ENCODE measurements at regions of chr13 and their contacts with region 1.

Region 1: GRCh38 chr13:100235311-100235901 is 146.5 kb downstream of the PCCA start:
- DNase-seq: no peak
- ATAC-seq: peak; percentile 71
- H3K4me3 ChIP-seq: no peak overlapping the region
- H3K27ac ChIP-seq: no peak overlapping the region
- H3K4me1 ChIP-seq: no peaks in the 10 kb centered on the region; the same call in none of the 2 replicates
- H3K27me3 ChIP-seq: no peaks in the 10 kb centered on the region
- CTCF ChIP-seq: peak; percentile 30 to 53 (median 34); a peak in 4 of 6 replicates
- EP300 ChIP-seq: no peak
- POLR2A ChIP-seq: no peak
- RAD21 ChIP-seq: peak; percentile 83

Region 2: DNA sequence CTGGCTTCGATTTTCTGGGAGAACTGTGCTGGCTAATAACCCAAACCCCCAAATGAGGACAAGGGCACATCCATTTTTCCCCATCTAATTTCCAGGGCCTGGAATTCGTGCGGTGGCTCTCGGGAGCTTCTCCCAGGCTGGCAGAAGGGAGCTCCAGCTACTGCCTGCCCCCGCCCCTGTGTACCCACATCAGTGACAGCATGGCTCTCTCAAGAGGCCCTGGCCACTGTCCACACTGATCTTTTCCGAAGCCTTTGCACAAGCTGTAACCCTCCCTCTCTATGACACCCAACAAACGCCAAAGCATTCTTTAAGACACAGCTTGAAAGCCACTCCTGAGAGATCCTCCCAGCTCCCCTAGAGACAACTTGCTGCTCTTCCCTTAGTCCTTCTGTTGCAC is 337.0 kb before region 1 on chr13:
- CTCF ChIA-PET with region 1: interaction called, 18 read pairs
- POLR2A ChIA-PET with region 1: no interaction called
- RAD21 ChIA-PET with region 1: interaction called, 8 read pairs
- SMC1A ChIA-PET with region 1: interaction called, 6 read pairs
- in situ Hi-C with region 1: no loop called
- intact Hi-C with region 1: loop called (anchors 1 kb)
- DNase-seq: no peak
- ATAC-seq: no peak
- H3K4me3 ChIP-seq: no peak overlapping the region
- H3K27ac ChIP-seq: no peak overlapping the region
- H3K4me1 ChIP-seq: no peaks in the 10 kb centered on the region
- H3K27me3 ChIP-seq: peaks cover 0 to 12% of the 10 kb centered on the region in 2 experiments; a peak in 2 of 4 replicates
- CTCF ChIP-seq: no peak
- EP300 ChIP-seq: no peak
- POLR2A ChIP-seq: no peak
- RAD21 ChIP-seq: no peak

Region 3: GRCh38 chr13:99916366-99917103 is 318.9 kb before region 1 on chr13:
- CTCF ChIA-PET with region 1: interaction called, 74 read pairs
- POLR2A ChIA-PET with region 1: no interaction called
- RAD21 ChIA-PET with region 1: interaction called, 18 read pairs
- SMC1A ChIA-PET with region 1: interaction called, 33 read pairs
- in situ Hi-C with region 1: loop called (anchors 5 kb)
- intact Hi-C with region 1: loop called (anchors 1 kb)
- DNase-seq: peak; percentile 31
- ATAC-seq: peak; percentile 95
- H3K4me3 ChIP-seq: no peak overlapping the region
- H3K27ac ChIP-seq: no peak overlapping the region
- H3K4me1 ChIP-seq: no peaks in the 10 kb centered on the region
- H3K27me3 ChIP-seq: no peaks in the 10 kb centered on the region
- CTCF ChIP-seq: peak; percentile 91 to 99 (median 93)
- EP300 ChIP-seq: no peak
- POLR2A ChIP-seq: no peak
- RAD21 ChIP-seq: peak; percentile 86

Region 4: GRCh38 chr13:99995589-99996380 is 239.6 kb before region 1 on chr13:
- CTCF ChIA-PET with region 1: interaction called, 3 read pairs
- POLR2A ChIA-PET with region 1: no interaction called
- RAD21 ChIA-PET with region 1: interaction called, 3 read pairs
- SMC1A ChIA-PET with region 1: no interaction called
- in situ Hi-C with region 1: no loop called
- intact Hi-C with region 1: loop called (anchors 10 kb)
- DNase-seq: no peak
- ATAC-seq: no peak
- H3K4me3 ChIP-seq: no peak overlapping the region
- H3K27ac ChIP-seq: no peak overlapping the region
- H3K4me1 ChIP-seq: no peaks in the 10 kb centered on the region
- H3K27me3 ChIP-seq: peaks cover 7 to 29% of the 10 kb centered on the region in 2 experiments
- CTCF ChIP-seq: no peak
- EP300 ChIP-seq: no peak
- POLR2A ChIP-seq: no peak
- RAD21 ChIP-seq: no peak

Region 5: DNA sequence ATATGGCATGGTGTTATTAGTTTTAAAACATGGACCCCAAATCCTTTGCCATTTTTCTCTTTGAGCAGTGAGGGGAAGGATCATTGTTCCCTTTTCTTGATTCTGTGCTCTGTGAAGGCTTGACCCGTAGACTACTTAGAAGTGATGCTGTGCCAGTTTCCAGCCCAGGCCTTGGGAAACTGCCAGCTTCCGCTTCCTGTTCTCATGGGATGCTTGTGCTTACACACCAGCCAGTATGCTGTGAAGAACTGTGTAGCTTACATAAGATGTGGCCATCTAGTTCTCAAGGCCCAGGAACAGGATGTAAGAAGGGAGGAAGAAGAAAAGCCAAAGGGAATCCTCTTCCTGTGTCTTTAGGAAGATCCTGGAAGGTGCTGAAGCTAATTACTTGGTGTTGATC is 34.4 kb after region 1 on chr13:
- CTCF ChIA-PET with region 1: no interaction called
- POLR2A ChIA-PET with region 1: no interaction called
- RAD21 ChIA-PET with region 1: no interaction called
- SMC1A ChIA-PET with region 1: no interaction called
- in situ Hi-C with region 1: no loop called
- intact Hi-C with region 1: no loop called
- DNase-seq: no peak
- ATAC-seq: no peak
- H3K4me3 ChIP-seq: no peak overlapping the region
- H3K27ac ChIP-seq: no peak overlapping the region
- H3K4me1 ChIP-seq: no peaks in the 10 kb centered on the region
- H3K27me3 ChIP-seq: no peaks in the 10 kb centered on the region
- CTCF ChIP-seq: no peak
- EP300 ChIP-seq: no peak
- POLR2A ChIP-seq: no peak
- RAD21 ChIP-seq: no peak

Region 6: GRCh38 chr13:100694722-100695508 is 459.5 kb after region 1 on chr13:
- CTCF ChIA-PET with region 1: no interaction called
- POLR2A ChIA-PET with region 1: no interaction called
- RAD21 ChIA-PET with region 1: no interaction called
- SMC1A ChIA-PET with region 1: no interaction called
- in situ Hi-C with region 1: no loop called
- intact Hi-C with region 1: no loop called
- DNase-seq: no peak
- ATAC-seq: peak; percentile 68
- H3K4me3 ChIP-seq: no peak overlapping the region
- H3K27ac ChIP-seq: no peak overlapping the region
- H3K4me1 ChIP-seq: no peaks in the 10 kb centered on the region
- H3K27me3 ChIP-seq: no peaks in the 10 kb centered on the region
- CTCF ChIP-seq: peak in 2 of 3 experiments; percentile 25 to 35; a peak in 3 of 6 replicates
- EP300 ChIP-seq: no peak
- POLR2A ChIP-seq: no peak
- RAD21 ChIP-seq: no peak